AG04449 (cell line): ENCODE measurements at regions of chr7 and their contacts with region 1.

Region 1: DNA sequence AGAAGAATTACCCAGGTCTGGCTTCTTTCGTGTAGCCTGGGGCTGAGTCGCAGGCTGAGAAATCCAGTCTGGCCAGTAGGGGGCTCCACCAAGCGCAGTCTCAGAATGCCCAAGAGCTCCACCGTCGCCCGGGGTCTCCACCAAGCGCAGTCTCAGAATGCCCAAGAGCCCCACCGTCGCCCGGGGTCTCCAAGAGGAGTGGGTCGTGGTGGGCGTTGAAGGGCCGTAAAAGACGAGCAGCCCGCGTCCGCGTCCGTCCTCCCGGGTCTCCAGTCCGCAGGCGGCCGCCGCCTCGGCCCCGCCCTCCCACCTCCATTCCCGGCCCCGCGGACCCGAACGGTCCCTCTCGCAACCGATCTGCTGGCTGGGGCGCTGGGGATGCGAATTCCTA is 895 bp upstream of the ZYX start:
- DNase-seq: no peak
- H3K4me3 ChIP-seq: peak overlapping the region; percentile 91
- CTCF ChIP-seq: peak; percentile 86

Region 2: DNA sequence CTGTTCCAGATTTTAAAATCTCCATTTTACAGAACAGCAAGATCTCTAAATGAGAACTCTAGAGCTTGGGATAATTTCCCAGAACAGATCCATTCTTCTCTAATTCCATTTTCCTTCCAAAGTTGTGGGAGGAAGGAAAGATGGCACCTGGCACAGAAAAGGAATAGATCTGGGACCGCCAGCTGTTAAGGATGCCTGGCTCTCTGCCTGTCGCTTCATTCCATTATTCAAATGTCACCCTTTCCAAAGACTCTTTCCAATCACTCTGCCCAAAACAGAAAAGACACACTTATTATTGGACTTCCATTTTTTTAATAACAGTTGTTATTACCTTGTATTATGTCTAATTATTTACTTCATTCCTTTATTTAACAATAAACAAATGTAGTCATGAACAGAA is 352.6 kb before region 1 on chr7:
- CTCF ChIA-PET with region 1: no interaction called
- POLR2A ChIA-PET with region 1: no interaction called
- DNase-seq: no peak
- H3K4me3 ChIP-seq: no peak overlapping the region
- CTCF ChIP-seq: no peak

Region 3: DNA sequence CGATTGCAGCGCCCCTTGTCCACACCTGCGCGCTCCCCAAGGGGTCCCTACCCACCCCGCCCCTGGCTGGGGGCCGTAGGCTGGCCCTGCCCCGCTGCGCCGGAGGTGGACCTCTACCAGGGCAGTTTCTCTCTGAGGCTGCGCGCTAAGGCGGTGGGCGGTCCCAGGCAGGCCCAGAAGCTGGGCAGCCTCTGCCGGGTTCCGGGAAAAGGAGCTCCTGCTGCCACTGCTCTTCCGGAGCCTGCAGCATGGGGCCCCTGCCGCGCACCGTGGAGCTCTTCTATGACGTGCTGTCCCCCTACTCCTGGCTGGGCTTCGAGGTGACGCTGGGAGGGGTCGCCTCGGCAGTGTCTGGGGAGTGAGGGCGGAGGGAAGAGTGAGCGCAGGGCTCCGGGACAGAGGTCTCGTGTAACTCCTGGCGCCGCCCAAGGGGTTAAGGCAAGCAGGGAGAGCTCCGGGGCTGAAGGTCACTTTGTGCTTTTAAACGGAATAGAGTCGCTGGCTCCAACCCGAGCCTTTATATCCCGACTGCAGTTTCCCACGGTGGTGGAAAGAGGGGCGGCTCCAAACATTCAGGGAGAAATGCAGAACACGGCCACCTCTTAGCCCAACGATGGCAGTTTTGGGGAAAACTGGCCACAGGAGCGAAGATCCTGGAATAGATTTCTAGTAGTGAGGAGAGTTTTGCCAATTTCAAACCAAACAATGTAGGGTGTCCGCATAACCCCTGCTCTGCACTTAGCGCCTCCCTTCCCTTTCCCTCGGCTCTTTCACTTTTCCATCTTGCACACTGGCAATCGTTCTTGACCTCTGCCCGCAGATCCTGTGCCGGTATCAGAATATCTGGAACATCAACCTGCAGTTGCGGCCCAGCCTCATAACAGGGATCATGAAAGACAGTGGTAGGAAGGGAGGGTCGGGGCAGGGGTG is 116.7 kb before region 1 on chr7 and contains the start of gene GSTK1:
- CTCF ChIA-PET with region 1: no interaction called
- POLR2A ChIA-PET with region 1: interaction called, 11 read pairs
- DNase-seq: no peak
- H3K4me3 ChIP-seq: peak within 1 kb of the TSS; percentile 93
- CTCF ChIP-seq: no peak

Region 4: DNA sequence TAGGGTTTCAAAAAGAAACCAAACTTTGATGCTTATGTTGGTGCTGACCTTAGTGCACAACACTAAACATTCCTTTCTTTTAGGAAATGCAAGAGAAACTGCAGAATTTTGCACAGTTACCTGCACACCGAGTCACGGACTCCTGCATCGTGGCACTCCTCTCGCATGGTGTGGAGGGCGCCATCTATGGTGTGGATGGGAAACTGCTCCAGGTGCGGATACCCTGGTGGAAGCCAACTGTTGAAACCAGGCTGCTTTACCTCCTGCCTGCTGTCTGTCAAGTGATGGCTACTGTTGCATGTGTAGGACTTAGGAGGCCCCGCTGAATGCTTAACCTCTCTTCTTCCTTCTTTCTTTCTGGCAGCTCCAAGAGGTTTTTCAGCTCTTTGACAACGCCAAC is 80.4 kb before region 1 on chr7:
- CTCF ChIA-PET with region 1: interaction called, 11 read pairs
- POLR2A ChIA-PET with region 1: no interaction called
- DNase-seq: no peak
- H3K4me3 ChIP-seq: no peak overlapping the region
- CTCF ChIP-seq: peak; percentile 37

Region 5: DNA sequence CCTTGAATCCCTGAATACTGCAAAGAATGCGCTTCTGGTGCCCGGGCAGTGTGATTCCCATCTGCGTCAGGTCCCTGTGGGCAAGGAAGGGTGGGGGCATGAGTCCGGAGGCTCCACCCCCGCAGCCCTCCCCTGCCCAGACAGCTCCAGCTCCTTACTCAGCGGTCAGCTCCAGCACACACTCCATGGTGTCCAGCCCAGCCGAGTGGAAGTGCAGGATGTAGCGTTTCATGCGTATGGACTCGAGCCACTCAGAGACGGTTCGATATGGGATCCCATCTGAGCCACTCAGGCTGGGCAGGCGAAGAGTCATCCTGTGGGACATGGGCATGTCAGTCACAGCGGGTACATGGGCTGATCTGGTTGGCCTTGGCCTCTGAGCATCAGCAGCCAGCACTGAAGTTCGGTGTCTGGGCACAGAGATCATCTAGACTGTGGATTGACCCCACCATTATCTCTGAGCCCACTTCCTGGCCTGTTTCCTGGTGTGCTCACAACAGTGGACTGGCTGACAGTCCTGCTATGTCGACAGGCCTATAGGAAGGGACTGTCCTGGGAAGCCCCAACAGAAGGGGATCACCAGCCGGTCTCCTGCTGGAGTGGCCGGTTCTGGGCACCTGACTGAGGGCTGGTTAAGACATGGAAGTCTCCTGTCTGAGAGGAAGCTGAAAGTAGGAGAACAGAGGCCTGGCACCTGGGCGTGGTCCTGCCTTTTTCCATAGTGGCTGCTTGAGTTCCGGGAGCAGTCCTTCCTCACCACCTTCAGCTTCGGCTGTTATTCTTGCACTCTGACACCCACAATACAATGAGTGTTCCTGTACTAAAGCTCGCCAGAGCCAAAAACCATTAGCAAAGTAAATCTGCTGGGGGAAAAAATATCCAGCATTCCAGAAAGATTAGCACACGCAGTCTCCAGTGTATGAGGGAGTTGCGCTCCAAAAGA is 11.5 kb after region 1 on chr7:
- CTCF ChIA-PET with region 1: interaction called, 24 read pairs
- POLR2A ChIA-PET with region 1: interaction called, 104 read pairs
- DNase-seq: no peak
- H3K4me3 ChIP-seq: no peak overlapping the region; the same call in 1 of the 2 replicates
- CTCF ChIP-seq: no peak

Region 6: GRCh38 chr7:143408686-143409561 is 28.7 kb after region 1 on chr7 and contains the start of gene EPHA1:
- CTCF ChIA-PET with region 1: interaction called, 13 read pairs
- POLR2A ChIA-PET with region 1: no interaction called
- DNase-seq: no peak
- H3K4me3 ChIP-seq: no peak within 1 kb of the TSS
- CTCF ChIP-seq: peak; percentile 4